Lower leg skin (tissue), 4 donors: ENCODE measurements at regions of chr9 and their contacts with region 1.

Region 1: DNA sequence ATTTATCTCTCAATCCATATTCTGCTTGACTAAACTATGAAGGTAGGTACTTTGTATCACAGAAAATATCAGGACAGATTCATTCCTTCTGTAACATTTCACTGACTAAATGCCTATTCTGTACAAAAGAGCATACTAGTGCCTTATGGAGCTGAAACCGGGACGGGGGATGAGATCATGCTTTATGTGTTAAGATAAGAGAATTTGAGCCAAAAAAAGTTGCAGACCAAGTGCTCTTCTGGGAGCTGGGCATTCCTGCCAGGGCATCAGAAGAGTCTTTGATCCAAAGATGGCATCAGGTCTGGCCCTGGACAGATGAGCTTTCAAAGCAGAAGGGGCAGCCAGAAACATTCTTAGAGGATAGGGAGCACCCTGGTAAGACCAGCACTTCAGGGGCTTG is 27.5 kb upstream of the GLIPR2 start:
- DNase-seq: no peak
- H3K4me3 ChIP-seq: no peak overlapping the region
- CTCF ChIP-seq: no peak
- POLR2A ChIP-seq: no peak

Region 2: GRCh38 chr9:34190996-34191892 is 1917.8 kb before region 1 on chr9:
- intact Hi-C with region 1: loop called (anchors 5 kb)
- DNase-seq: peak in 1 of 2 donors; percentile 18
- H3K4me3 ChIP-seq: no peak overlapping the region
- CTCF ChIP-seq: no peak
- POLR2A ChIP-seq: no peak

Region 3: DNA sequence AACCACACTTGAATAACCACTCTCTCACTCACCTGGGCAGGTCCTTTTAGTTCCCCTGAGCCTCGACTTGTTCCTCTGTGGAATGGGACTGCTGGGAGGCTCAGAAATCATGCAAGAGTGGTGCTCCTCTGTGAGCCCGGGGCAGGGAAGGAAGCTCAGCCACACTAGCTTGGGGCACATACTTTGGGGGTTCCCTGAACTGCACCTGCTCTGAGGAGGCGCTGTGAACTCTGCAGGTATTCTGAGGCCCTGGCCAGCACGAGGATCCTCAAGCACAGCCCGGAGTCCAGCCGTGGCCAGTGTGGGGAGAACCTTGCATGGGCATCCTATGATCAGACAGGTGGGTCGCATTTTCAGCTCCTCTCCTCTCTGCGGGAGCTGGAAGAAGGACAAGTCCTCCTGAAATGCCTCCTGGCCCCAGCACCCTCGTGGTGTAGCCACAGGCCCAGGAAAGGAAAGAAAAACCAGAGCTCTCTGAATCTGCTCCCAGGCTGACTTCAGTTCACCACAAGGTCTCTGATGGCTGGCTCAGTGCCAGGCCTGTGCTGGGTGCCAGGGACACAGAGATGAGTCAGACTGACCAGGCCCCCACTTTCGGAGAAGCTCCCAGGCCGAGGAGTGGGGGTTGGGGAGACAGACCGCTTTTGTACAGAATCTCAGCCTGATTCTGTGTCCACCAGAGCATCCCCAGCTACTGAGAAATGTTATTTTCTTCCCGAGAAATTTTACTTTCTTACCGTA is 39.4 kb after region 1 on chr9:
- intact Hi-C with region 1: no loop called
- DNase-seq: peak; percentile 94 to 99
- H3K4me3 ChIP-seq: no peak overlapping the region
- CTCF ChIP-seq: no peak
- POLR2A ChIP-seq: no peak